Common myeloid progenitor, CD34-positive (primary cell): ENCODE measurements at regions of chr2 and their contacts with region 1.

Region 1: GRCh38 chr2:240622531-240623235 is 2.6 kb upstream of the GPR35 start:
- DNase-seq: peak; percentile 74 to 92 (median 86)
- H3K4me3 ChIP-seq: peak overlapping the region in 2 of 7 experiments; percentile 33 to 45
- H3K27ac ChIP-seq: no peak overlapping the region
- H3K4me1 ChIP-seq: peaks cover 4 to 72% (median 68%) of the 10 kb centered on the region in 4 experiments
- H3K27me3 ChIP-seq: no peaks in the 10 kb centered on the region

Region 2: GRCh38 chr2:240519396-240520129 is 103.1 kb before region 1 on chr2:
- CTCF ChIA-PET with region 1: no interaction called
- POLR2A ChIA-PET with region 1: no interaction called
- DNase-seq: peak in 1 of 3 donors; percentile 26
- H3K4me3 ChIP-seq: peak overlapping the region in 1 of 7 experiments; percentile 19
- H3K27ac ChIP-seq: no peak overlapping the region
- H3K4me1 ChIP-seq: peaks cover 0 to 7% (median 3%) of the 10 kb centered on the region in 4 experiments
- H3K27me3 ChIP-seq: peaks cover 0 to 23% (median 0%) of the 10 kb centered on the region in 5 experiments

Region 3: GRCh38 chr2:240611601-240612210 is 11.0 kb before region 1 on chr2:
- CTCF ChIA-PET with region 1: interaction called, 13 read pairs
- POLR2A ChIA-PET with region 1: interaction called, 4 read pairs
- DNase-seq: peak in 2 of 3 donors; percentile 83 to 86
- H3K4me3 ChIP-seq: peak overlapping the region in 4 of 7 experiments; percentile 1 to 32 (median 13)
- H3K27ac ChIP-seq: no peak overlapping the region
- H3K4me1 ChIP-seq: peaks cover 1 to 46% (median 24%) of the 10 kb centered on the region in 4 experiments
- H3K27me3 ChIP-seq: no peaks in the 10 kb centered on the region

Region 4: DNA sequence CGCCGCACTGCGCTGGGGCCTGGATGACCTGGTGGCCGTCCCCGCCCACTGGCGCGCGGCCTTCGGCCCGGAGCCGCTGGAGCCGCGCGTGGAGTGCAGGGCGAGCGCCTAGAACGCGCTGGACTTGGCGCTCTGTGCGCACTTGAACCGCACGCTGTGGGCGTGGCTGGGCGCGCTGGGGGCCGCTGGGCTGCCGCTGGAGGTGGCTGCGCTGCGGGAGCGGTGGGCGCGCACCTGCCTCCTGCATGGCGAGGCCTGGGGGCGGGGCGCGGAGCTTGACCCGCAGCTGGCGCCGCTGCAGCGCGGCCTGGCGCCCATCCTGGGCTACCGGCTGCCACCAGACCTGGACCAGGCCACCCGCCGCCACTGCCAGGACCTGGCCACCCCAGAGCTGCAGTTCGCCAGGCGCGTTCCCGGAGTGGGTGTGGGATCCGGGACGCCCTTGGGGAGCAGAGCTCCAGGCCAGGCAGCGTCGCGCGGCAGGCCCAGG is 50.1 kb after region 1 on chr2:
- CTCF ChIA-PET with region 1: no interaction called
- POLR2A ChIA-PET with region 1: no interaction called
- DNase-seq: no peak
- H3K4me3 ChIP-seq: peak overlapping the region in 1 of 7 experiments; percentile 16
- H3K27ac ChIP-seq: no peak overlapping the region
- H3K4me1 ChIP-seq: peaks cover 0 to 6% (median 3%) of the 10 kb centered on the region in 4 experiments
- H3K27me3 ChIP-seq: peaks cover 4 to 48% (median 10%) of the 10 kb centered on the region in 5 experiments